Mammary epithelial cell (primary cell): ENCODE measurements at regions of chr1 and their contacts with region 1.

Region 1: GRCh38 chr1:206106328-206107167 is 10.6 kb downstream of the AVPR1B start:
- DNase-seq: peak; percentile 72
- H3K4me3 ChIP-seq: no peak overlapping the region
- H3K27ac ChIP-seq: no peak overlapping the region
- H3K4me1 ChIP-seq: peaks cover 11% of the 10 kb centered on the region
- H3K27me3 ChIP-seq: no peaks in the 10 kb centered on the region
- CTCF ChIP-seq: peak; percentile 90 to 96

Region 2: DNA sequence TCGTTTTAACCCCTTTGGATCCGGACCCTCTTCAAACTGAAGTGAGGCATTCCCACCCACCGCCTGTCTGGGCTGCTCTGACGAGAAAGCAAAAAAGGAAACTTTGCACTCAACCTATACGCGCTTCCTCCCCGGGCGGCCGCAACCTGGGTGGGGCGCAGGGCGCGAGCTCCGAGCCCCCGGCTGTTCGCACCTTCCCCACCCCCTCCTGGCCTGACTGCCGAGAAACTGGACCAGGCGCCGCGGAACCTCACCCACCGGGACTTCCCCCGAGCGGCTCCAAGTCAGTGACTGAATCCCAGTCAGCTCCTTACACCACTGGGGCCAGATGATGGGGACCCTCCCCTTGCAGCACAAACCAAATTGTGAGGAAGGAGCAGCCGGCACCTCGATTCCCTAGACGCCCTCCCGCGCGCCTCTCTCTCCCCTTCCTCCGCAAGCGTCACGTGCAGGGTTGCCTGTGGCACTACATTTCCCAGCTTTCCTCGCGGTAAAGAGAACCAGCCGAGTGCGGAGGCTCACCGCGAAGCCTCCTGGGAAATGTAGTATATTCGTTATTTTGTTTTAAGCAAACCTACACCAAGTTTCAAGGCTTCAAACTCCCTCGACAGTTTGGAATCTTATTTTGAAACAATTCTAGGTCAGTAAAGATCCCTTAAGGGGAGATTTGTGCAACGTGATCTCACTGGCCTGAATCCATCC is 331.4 kb before region 1 on chr1 and contains the start of gene RAB29:
- CTCF ChIA-PET with region 1: no interaction called
- dilution Hi-C with region 1: no loop called
- in situ Hi-C with region 1: loop called in 1 of 2 experiments (anchors 25 kb)
- intact Hi-C with region 1: loop called (anchors 5 kb)
- DNase-seq: peak; percentile 77
- H3K4me3 ChIP-seq: peak within 1 kb of the TSS; percentile 74 to 78 (median 75)
- H3K27ac ChIP-seq: peak within 1 kb of the TSS; percentile 57
- H3K4me1 ChIP-seq: peaks cover 8% of the 10 kb centered on the region
- H3K27me3 ChIP-seq: no peaks in the 10 kb centered on the region
- CTCF ChIP-seq: no peak
- total RNA-seq, gene RAB29: 38.4 to 41.2 TPM

Region 3: DNA sequence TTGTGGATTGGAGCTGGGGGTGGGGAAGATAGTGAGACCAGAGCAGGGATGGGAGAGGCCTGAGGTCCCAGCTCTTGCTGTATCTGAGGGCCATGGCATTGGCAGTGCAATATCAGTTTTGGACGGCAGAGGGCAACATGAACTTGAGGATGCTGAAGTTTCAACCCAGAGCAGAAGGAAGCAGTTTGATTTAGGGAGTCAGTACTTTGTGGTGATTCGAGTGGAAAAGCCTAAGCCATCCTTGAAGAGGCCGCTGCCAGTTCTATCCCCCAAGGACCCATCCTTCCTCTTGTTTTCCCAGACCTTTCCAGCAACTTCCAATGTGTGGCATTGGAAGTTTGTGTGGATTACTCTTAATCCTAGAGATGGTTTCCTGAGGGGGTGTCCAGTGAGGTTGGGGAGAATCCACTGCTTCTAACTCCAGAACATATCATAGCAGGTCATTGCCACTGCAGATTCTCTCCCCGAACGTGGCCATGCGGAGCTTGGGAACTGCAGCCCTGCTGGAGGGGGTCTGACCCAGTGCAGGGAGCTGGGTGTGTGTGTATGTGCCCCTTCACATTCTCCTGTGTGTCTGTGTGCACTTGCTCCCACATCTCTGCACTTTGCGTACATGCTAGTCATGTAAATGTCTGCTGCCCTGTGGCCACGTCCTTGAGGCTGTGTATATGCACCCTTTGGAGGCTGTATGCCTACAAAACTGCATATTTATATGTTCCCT is 187.4 kb before region 1 on chr1:
- CTCF ChIA-PET with region 1: no interaction called
- dilution Hi-C with region 1: loop called (anchors 25 kb)
- in situ Hi-C with region 1: loop called in 1 of 2 experiments (anchors 10 kb)
- intact Hi-C with region 1: loop called (anchors 1 kb)
- DNase-seq: peak; percentile 66
- H3K4me3 ChIP-seq: no peak overlapping the region
- H3K27ac ChIP-seq: no peak overlapping the region
- H3K4me1 ChIP-seq: no peaks in the 10 kb centered on the region
- H3K27me3 ChIP-seq: no peaks in the 10 kb centered on the region
- CTCF ChIP-seq: peak; percentile 83 to 93

Region 4: GRCh38 chr1:205983925-205984725 is 122.4 kb before region 1 on chr1:
- CTCF ChIA-PET with region 1: interaction called, 5 read pairs
- dilution Hi-C with region 1: no loop called
- in situ Hi-C with region 1: loop called (anchors 5 kb)
- intact Hi-C with region 1: loop called (anchors 1 kb)
- DNase-seq: peak; percentile 96
- H3K4me3 ChIP-seq: peak overlapping the region in 1 of 3 experiments; percentile 2
- H3K27ac ChIP-seq: no peak overlapping the region
- H3K4me1 ChIP-seq: peaks cover 32% of the 10 kb centered on the region
- H3K27me3 ChIP-seq: no peaks in the 10 kb centered on the region
- CTCF ChIP-seq: peak; percentile 79 to 90

Region 5: DNA sequence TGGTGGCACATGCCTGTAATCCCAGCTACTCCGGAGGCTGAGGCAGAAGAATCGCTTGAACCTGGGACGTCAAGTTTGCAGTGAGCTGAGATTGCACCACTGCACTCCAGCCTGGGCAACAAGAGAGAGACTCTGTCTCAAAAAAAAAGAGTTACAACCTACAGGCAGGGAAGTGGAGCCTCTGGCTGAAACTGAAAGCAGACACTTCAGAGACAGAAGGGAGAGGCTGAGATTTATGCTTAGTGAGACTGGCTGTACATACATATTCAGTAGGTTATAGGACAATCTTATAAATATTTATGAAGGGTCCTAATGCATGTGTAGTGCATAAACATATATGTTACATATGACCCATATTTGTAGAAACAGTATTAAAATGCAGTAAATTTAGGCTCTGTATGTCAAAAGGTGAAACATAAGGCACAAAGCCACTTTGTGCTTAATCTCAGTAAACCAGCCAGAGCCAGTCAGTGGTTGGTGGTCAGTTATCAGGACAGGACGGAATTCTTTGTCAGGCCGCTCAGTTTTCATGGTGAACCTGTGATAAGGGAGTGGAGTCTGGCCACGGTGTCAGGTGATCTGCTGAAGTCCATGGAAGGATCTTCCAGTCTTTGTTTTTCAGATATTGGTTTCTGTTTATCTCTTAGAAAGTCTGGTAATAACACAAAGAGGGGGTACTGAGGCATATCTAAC is 39.9 kb before region 1 on chr1:
- CTCF ChIA-PET with region 1: no interaction called
- dilution Hi-C with region 1: loop called (anchors 5 kb)
- in situ Hi-C with region 1: no loop called
- intact Hi-C with region 1: no loop called
- DNase-seq: no peak
- H3K4me3 ChIP-seq: no peak overlapping the region
- H3K27ac ChIP-seq: no peak overlapping the region
- H3K4me1 ChIP-seq: no peaks in the 10 kb centered on the region
- H3K27me3 ChIP-seq: no peaks in the 10 kb centered on the region
- CTCF ChIP-seq: no peak